GM13976 (cell line): ENCODE measurements at regions of chr5 and their contacts with region 1.

Region 1: DNA sequence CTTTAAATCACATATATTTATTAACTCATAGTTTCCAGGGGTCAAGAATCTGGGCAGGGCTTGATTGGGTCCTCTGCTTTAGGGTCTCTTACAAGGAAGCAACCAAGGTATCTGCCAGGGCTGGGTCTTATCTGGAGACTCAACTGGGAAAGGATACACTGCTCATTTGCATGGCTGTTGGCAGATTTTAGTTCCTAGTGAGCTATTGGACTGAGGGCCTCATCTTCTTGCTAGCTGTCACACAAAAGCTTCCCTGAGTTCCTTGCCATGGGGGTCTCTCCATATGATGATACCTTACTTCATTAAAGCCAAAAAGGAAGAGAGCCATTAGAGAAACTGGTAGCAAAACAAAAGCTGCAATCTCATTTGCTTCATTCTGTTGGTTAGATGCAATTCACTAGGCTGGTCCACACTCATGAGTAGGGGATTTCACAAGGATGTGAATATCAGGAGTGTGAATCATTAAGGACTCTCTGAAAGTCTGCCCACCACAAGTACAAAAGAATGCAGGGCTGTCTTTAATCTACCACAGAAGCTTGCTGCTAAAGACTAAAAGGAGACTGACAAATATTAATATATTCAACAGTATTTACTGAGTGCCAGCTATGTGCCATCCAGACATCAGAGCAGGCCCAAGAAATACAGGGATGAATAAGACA is 42.0 kb upstream of the TIMD4 start:
- DNase-seq: peak; percentile 26
- CTCF ChIP-seq: no peak

Region 2: GRCh38 chr5:155943516-155944407 is 1061.3 kb before region 1 on chr5:
- in situ Hi-C with region 1: loop called (anchors 25 kb)
- DNase-seq: peak; percentile 29
- CTCF ChIP-seq: peak; percentile 67